Activated B cell treated with CpG ODN at 0.5 μM for 24 hours (primary cell): ENCODE measurements at regions of chr4 and their contacts with region 1.

Region 1: DNA sequence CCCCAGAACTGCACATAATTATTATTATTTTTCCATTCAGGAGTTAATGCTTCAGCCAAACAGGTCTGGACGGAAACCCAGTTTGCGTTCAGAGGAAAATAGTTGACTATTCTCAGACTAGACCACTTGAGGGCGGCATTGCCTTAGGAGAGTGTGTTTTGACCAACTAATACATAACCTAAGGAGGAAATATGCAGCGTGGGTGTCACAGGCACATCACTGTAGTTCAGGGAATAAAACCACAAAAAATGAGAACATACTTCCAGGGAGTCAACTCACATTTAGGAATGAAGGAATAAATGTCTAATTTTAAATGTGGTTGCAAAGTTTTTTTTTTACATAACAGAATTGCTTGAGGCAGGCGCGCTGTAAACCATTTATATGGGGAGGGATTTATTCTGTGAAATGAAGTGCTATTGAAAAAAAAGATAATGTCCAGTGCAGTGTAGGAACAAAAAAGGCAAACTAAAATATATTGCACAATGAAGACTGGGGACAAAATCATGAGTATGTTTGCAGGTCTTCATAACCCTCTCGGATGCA is 93.3 kb downstream of the SYNPO2 start:
- DNase-seq: no peak
- ATAC-seq: peak; percentile 57
- H3K4me3 Mint-ChIP-seq: no peak overlapping the region
- H3K27ac Mint-ChIP-seq: no peak overlapping the region
- H3K4me1 Mint-ChIP-seq: no peaks in the 10 kb centered on the region
- H3K27me3 Mint-ChIP-seq: peaks cover 4% of the 10 kb centered on the region
- CTCF ChIP-seq: no peak

Region 2: DNA sequence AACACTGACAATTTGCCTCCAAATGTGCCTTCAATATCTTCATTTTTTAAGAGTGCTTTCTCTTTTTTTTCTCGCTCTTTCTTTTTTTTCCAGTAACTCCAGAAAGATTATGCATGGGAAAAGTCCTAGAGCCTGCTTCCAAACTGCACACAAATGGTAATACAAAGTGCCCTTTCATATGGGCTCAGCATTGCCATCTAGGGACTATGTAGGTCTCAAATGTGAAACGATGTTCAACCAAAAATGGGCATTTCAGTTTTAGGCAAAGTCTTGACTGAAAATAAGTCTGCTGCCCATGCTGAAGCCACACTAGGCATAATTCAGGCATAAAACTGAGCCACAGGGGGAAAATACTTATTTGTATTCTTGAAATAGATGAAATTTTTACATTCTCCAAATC is 27.7 kb before region 1 on chr4:
- CTCF ChIA-PET with region 1: no interaction called
- POLR2A ChIA-PET with region 1: no interaction called
- intact Hi-C with region 1: no loop called
- DNase-seq: no peak
- ATAC-seq: no peak
- H3K4me3 Mint-ChIP-seq: no peak overlapping the region
- H3K27ac Mint-ChIP-seq: no peak overlapping the region
- H3K4me1 Mint-ChIP-seq: no peaks in the 10 kb centered on the region
- H3K27me3 Mint-ChIP-seq: no peaks in the 10 kb centered on the region
- CTCF ChIP-seq: no peak

Region 3: GRCh38 chr4:119041951-119042560 is 60.1 kb after region 1 on chr4:
- CTCF ChIA-PET with region 1: interaction called, 5 read pairs
- POLR2A ChIA-PET with region 1: no interaction called
- intact Hi-C with region 1: loop called (anchors 2 kb)
- DNase-seq: no peak
- ATAC-seq: peak; percentile 83
- H3K4me3 Mint-ChIP-seq: no peak overlapping the region
- H3K27ac Mint-ChIP-seq: no peak overlapping the region
- H3K4me1 Mint-ChIP-seq: peaks cover 5% of the 10 kb centered on the region
- H3K27me3 Mint-ChIP-seq: no peaks in the 10 kb centered on the region
- CTCF ChIP-seq: no peak